ENCODE measurements at regions of chr15 and their contacts with region 1.

Region 1: DNA sequence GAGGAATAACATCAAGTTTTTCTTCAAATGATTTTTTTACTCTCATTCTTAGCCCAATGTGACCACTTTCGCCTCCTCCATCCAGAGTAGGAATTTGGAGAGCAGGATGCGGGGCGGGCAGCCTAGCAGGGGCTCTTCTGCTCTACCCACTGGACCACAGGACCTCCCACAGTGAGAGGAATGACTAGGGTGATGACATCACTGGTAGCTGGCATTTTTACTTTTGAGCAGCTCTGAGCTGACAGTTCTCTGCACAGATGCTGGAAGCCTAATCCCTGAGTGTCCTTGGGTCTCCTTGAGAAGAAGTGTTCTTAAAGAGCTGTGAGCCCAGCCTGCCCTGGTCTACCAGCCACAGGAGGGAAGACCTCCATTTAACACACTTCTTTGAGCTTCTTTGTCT is 1.4 kb upstream of the HCN4 start:
- DNase-seq: no peak
- ATAC-seq: no peak
- H3K4me3 ChIP-seq: no peak overlapping the region
- H3K27ac ChIP-seq: no peak overlapping the region
- H3K4me1 ChIP-seq: peaks cover 0 to 23% (median 9%) of the 10 kb centered on the region in 9 donors
- H3K27me3 ChIP-seq: peaks cover 5 to 77% (median 64%) of the 10 kb centered on the region in 7 donors
- CTCF ChIP-seq: no peak

Region 2: DNA sequence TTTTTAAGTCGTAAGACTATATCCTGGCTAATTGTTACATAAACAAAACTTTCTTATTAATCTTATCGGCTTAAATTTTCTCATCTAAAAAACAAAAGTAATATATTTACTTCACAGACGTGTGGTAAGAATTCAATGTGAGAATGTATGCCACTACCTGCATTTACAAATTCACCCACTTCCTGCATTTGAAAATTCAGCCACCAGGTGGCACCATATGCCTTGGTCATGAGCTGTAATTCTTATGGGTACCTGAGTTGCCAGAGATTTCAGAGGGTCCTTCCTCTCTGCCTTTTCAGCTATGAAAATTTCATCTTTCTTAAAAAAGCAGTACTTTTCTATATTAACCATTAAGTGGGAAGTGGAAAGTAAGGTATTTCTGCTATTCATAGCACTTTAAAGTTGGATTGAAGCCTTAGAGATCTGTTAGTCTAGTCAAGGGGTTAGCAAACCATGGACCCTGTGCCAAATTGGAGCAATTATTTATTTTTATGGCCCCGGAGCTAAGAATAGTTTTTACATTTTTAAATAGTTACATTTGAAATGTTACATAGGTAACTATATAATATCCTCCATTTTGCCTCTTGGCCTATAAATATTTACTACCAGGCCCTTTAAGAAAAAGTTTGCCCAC is 129.2 kb before region 1 on chr15:
- intact Hi-C with region 1: no loop called
- DNase-seq: peak in 1 of 2 donors; percentile 67
- ATAC-seq: peak in 2 of 8 donors; percentile 51 to 61
- H3K4me3 ChIP-seq: no peak overlapping the region
- H3K27ac ChIP-seq: no peak overlapping the region
- H3K4me1 ChIP-seq: peaks cover 0 to 12% (median 0%) of the 10 kb centered on the region in 9 donors
- H3K27me3 ChIP-seq: no peaks in the 10 kb centered on the region
- CTCF ChIP-seq: peak; percentile 70 to 94 (median 88)

Region 3: DNA sequence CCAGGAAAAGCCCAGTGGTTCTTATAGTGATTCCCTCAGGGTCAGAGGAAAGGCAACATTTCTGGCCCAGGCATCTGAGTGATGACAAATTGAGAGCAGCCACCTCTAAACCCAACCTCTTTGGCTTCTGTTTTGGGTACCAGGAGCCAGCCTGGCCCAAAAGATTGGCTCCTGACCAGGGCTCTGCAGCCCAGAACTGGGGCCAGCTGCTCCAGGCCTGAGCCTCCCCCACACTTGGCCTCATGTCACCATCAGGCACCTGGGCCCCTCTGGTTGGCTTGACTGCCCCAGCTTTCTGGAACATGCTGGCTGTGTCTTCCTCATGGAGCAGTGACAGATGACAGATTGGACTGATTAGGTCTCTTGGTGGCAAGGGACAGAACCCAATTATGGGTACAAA is 24.6 kb after region 1 on chr15:
- intact Hi-C with region 1: loop called in 2 of 10 experiments (anchors 1 kb)
- DNase-seq: peak; percentile 67 to 69
- ATAC-seq: peak; percentile 82 to 98 (median 94)
- H3K4me3 ChIP-seq: no peak overlapping the region
- H3K27ac ChIP-seq: no peak overlapping the region
- H3K4me1 ChIP-seq: peaks cover 0 to 39% (median 12%) of the 10 kb centered on the region in 9 donors
- H3K27me3 ChIP-seq: peaks cover 0 to 13% (median 0%) of the 10 kb centered on the region in 7 donors
- CTCF ChIP-seq: no peak